Heart right ventricle (tissue), 16 donors: ENCODE measurements at regions of chr2 and their contacts with region 1.

Region 1: GRCh38 chr2:159286709-159287441 is 372 bp upstream of the WDSUB1 start:
- DNase-seq: peak; percentile 98 to 99
- ATAC-seq: peak; percentile 99
- H3K4me3 ChIP-seq: peak overlapping the region; percentile 47 to 98 (median 89)
- H3K27ac ChIP-seq: peak overlapping the region; percentile 73 to 97 (median 90)
- H3K4me1 ChIP-seq: peaks cover 0 to 27% (median 21%) of the 10 kb centered on the region in 9 donors
- H3K27me3 ChIP-seq: no peaks in the 10 kb centered on the region
- CTCF ChIP-seq: no peak

Region 2: DNA sequence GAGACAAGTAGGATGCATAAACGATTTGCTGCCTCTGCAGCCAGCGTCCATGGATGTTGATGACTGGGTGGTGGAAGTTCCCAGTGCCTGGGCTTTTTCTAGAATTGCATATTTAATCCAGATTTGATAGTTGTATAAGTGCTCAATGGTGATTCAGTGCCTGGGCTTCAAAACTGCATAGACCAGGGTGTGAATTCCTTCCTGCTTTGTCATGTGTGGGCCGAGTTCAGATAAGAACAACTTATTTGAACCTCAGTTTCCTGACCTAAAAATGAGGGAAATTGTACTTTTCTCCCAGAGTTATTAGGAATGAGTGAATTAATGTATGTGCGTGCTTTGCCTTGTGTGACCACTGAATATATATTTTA is 155.0 kb before region 1 on chr2:
- intact Hi-C with region 1: loop called in 2 of 10 experiments (anchors 10 kb)
- DNase-seq: no peak
- ATAC-seq: peak in 3 of 8 donors; percentile 12 to 36 (median 18)
- H3K4me3 ChIP-seq: no peak overlapping the region
- H3K27ac ChIP-seq: peak overlapping the region in 9 of 10 donors; percentile 23 to 93 (median 66)
- H3K4me1 ChIP-seq: peaks cover 22 to 96% (median 80%) of the 10 kb centered on the region in 9 donors
- H3K27me3 ChIP-seq: no peaks in the 10 kb centered on the region
- CTCF ChIP-seq: no peak

Region 3: GRCh38 chr2:159226059-159226461 is 60.8 kb before region 1 on chr2:
- intact Hi-C with region 1: loop called in 1 of 10 experiments (anchors 10 kb)
- DNase-seq: no peak
- ATAC-seq: peak in 6 of 8 donors; percentile 17 to 60 (median 51)
- H3K4me3 ChIP-seq: no peak overlapping the region
- H3K27ac ChIP-seq: peak overlapping the region; percentile 58 to 84 (median 77)
- H3K4me1 ChIP-seq: peaks cover 7 to 62% (median 36%) of the 10 kb centered on the region in 9 donors
- H3K27me3 ChIP-seq: no peaks in the 10 kb centered on the region
- CTCF ChIP-seq: no peak

Region 4: GRCh38 chr2:159797543-159798375 is 510.9 kb after region 1 on chr2 and contains the start of gene CD302:
- intact Hi-C with region 1: loop called in 1 of 10 experiments (anchors 5 kb)
- DNase-seq: peak; percentile 80 to 86
- ATAC-seq: peak; percentile 81 to 93 (median 88)
- H3K4me3 ChIP-seq: peak within 1 kb of the TSS; percentile 56 to 97 (median 81)
- H3K27ac ChIP-seq: peak within 1 kb of the TSS; percentile 5 to 90 (median 82)
- H3K4me1 ChIP-seq: peaks cover 0 to 50% (median 16%) of the 10 kb centered on the region in 9 donors
- H3K27me3 ChIP-seq: no peaks in the 10 kb centered on the region
- CTCF ChIP-seq: no peak
- total RNA-seq, gene CD302: 8.2 to 25.2 (median 12.9) TPM